ENCODE measurements at regions of chr9 and their contacts with region 1.

Region 1: DNA sequence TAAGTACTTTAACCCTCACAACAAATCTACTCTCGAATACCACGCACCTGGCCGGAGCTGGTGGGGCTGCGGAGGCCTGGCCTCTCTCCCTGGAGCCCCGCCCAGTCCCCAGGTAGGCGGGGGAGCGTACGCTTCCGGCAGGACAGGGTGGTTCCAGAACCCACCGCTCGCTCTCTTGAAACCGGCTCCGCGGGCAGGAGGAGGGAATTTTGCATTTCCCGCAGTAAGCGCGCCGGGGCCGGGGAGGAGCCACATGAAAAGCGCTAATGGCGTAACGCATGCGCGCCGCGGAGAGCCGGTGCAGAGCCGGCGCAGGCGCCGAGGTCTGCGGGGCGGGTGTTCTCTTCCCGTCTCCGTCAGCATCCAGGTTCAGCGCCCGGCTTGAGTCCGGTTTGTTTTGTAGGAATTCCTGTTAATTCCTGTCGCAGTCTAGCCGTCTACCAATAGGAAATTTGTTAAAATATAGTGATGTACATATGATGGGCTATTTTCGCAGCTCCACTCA is 20.8 kb downstream of the CAVIN4 start:
- DNase-seq: no peak
- H3K4me3 ChIP-seq: peak overlapping the region; percentile 64
- CTCF ChIP-seq: no peak

Region 2: DNA sequence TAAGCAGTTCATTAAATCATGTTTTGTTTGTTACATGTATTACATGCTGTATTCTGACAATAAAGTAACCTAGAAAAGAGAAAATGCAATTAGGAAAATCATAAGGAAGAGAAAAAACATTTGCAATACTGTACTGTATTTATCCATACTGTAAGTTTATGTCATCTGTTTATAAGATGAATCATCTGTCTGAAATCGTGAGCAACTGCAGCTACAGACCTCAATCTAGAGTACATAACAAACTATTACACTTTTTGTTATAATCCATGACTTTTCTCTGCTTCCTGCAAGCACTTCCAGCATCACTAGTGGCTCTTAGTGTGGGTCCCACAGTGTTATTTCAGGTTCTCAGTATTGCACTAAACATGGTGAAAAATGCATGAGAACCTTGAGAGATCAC is 921.4 kb before region 1 on chr9:
- CTCF ChIA-PET with region 1: no interaction called
- POLR2A ChIA-PET with region 1: no interaction called
- DNase-seq: peak; percentile 5
- H3K4me3 ChIP-seq: no peak overlapping the region
- CTCF ChIP-seq: no peak

Region 3: DNA sequence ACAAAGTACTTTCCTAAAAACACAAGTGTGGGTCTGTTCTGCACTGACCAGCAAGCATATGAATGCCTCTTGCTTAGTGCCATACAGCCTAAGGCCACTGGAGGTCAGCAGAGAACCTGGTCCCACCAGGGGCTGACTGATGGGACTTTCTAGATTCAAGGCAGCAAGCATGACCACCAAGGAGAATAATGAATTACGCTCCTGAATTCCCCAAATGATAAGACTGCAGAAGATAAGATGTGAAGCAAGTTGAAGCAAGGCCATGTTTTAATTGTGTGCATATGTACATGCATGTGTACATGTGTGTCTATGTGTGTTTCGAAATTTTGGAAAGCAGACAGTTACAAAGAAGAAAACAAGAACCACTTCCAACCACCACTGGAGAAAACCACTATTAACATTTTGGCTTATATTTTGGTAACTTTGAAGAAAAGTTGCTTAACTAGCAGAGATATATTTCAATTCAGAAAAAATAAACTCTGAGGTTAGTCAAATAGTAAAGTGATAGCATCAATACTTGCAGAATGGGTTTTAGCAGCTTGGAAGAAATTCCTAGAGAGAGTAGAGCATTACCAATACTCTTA is 570.4 kb before region 1 on chr9:
- CTCF ChIA-PET with region 1: interaction called, 10 read pairs
- POLR2A ChIA-PET with region 1: no interaction called
- DNase-seq: peak; percentile 17
- H3K4me3 ChIP-seq: no peak overlapping the region
- CTCF ChIP-seq: peak; percentile 83

Region 4: GRCh38 chr9:100505564-100506159 is 93.0 kb before region 1 on chr9:
- CTCF ChIA-PET with region 1: interaction called, 14 read pairs
- POLR2A ChIA-PET with region 1: no interaction called
- DNase-seq: no peak
- H3K4me3 ChIP-seq: no peak overlapping the region
- CTCF ChIP-seq: peak; percentile 60

Region 5: GRCh38 chr9:100619665-100620064 is 21.0 kb after region 1 on chr9:
- CTCF ChIA-PET with region 1: interaction called, 37 read pairs
- POLR2A ChIA-PET with region 1: no interaction called
- DNase-seq: no peak
- H3K4me3 ChIP-seq: no peak overlapping the region
- CTCF ChIP-seq: no peak

Region 6: GRCh38 chr9:100652850-100653249 is 54.2 kb after region 1 on chr9:
- CTCF ChIA-PET with region 1: no interaction called
- POLR2A ChIA-PET with region 1: no interaction called
- DNase-seq: no peak
- H3K4me3 ChIP-seq: no peak overlapping the region
- CTCF ChIP-seq: no peak

Region 7: GRCh38 chr9:101311758-101312420 is 713.2 kb after region 1 on chr9:
- CTCF ChIA-PET with region 1: interaction called, 215 read pairs
- POLR2A ChIA-PET with region 1: no interaction called
- DNase-seq: peak; percentile 52
- H3K4me3 ChIP-seq: no peak overlapping the region
- CTCF ChIP-seq: peak; percentile 53

Region 8: GRCh38 chr9:101387871-101388506 is 789.3 kb after region 1 on chr9:
- CTCF ChIA-PET with region 1: interaction called, 16 read pairs
- POLR2A ChIA-PET with region 1: no interaction called
- DNase-seq: no peak
- H3K4me3 ChIP-seq: no peak overlapping the region
- CTCF ChIP-seq: peak; percentile 65

Measured in AG04449 (cell line).